BJ (cell line): ENCODE measurements at regions of chr4 and their contacts with region 1.

Region 1: GRCh38 chr4:120049732-120050494 is 16.7 kb downstream of the MAD2L1 start:
- DNase-seq: peak; percentile 67
- H3K4me3 ChIP-seq: peak overlapping the region; percentile 31
- H3K27me3 ChIP-seq: no peaks in the 10 kb centered on the region
- CTCF ChIP-seq: peak; percentile 80

Region 2: GRCh38 chr4:119623025-119623424 is 426.9 kb before region 1 on chr4:
- CTCF ChIA-PET with region 1: interaction called, 64 read pairs
- POLR2A ChIA-PET with region 1: no interaction called
- DNase-seq: no peak
- H3K4me3 ChIP-seq: no peak overlapping the region
- H3K27me3 ChIP-seq: no peaks in the 10 kb centered on the region
- CTCF ChIP-seq: no peak

Region 3: GRCh38 chr4:119804407-119804806 is 245.5 kb before region 1 on chr4:
- CTCF ChIA-PET with region 1: no interaction called
- POLR2A ChIA-PET with region 1: no interaction called
- DNase-seq: no peak
- H3K4me3 ChIP-seq: no peak overlapping the region
- H3K27me3 ChIP-seq: no peaks in the 10 kb centered on the region; the same call in 1 of the 2 replicates
- CTCF ChIP-seq: no peak

Region 4: DNA sequence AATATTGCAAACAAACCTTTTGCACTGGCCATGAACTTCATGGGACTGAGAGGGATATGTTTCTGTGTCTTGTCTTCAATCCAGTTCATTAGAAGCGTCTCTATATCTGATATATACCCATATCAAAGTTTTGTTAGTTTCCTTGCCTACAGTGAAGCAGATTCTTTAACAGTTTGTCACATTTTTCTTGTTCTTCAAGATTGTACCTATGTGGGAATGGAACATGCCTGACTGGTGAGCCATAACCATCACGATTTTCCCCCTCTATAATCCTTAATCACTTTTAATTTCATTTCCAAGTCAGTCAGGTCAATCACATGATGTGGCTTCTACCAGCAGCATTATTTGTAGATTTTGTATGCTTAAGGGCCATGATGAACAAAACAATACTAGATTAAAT is 224.2 kb before region 1 on chr4:
- CTCF ChIA-PET with region 1: no interaction called
- POLR2A ChIA-PET with region 1: no interaction called
- DNase-seq: no peak
- H3K4me3 ChIP-seq: no peak overlapping the region
- H3K27me3 ChIP-seq: no peaks in the 10 kb centered on the region
- CTCF ChIP-seq: no peak

Region 5: GRCh38 chr4:120007896-120008436 is 41.9 kb before region 1 on chr4:
- CTCF ChIA-PET with region 1: no interaction called
- POLR2A ChIA-PET with region 1: interaction called, 23 read pairs
- DNase-seq: no peak
- H3K4me3 ChIP-seq: no peak overlapping the region
- H3K27me3 ChIP-seq: no peaks in the 10 kb centered on the region
- CTCF ChIP-seq: no peak